OCI-LY7 (cell line): ENCODE measurements at regions of chr11 and their contacts with region 1.

Region 1: GRCh38 chr11:6682936-6683861 is at the start of gene MRPL17:
- DNase-seq: peak; percentile 100
- H3K4me3 ChIP-seq: peak within 1 kb of the TSS; percentile 85
- H3K27ac ChIP-seq: peak within 1 kb of the TSS; percentile 57
- H3K4me1 ChIP-seq: peaks cover 15% of the 10 kb centered on the region
- CTCF ChIP-seq: peak; percentile 87
- total RNA-seq, gene MRPL17: 46.8 and 59.7 TPM in 2 replicates

Region 2: DNA sequence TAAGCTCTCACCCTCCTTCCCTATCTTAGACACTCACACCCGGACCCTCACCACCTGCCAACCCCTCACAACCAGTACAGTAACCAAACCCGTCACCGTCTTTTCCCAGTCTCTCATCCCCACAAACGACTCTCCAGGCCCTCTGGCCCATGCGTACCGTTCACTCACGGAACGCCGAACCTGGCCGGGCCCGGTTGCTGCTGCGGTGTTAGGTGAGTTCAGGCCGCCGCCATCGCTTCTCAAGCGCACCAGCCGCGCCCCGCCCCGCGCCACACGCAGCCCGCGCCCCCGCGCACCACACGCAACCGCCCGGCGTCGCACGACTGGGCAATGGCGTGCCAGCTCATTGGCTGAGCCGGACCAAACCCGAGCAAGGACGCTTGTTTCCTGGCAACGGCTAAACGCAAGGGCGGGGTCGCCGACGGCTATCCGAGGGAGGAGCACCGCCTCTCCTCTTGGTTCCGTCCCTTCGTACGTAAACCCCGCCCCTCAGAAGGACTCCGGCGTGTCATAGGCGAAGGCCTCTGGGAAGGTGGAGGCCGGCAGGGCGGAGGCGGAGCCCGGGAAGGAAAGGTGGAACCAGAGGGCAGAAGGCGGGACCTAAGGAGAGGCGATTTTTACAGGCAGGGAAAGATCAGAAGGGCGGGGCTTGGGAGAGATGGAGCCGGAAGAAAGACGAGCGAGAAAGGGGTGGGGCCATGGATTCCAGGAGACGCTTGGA is 448.7 kb before region 1 on chr11 and contains the start of gene FHIP1B:
- CTCF ChIA-PET with region 1: no interaction called
- POLR2A ChIA-PET with region 1: interaction called, 3 read pairs
- intact Hi-C with region 1: loop called (anchors 10 kb)
- DNase-seq: peak; percentile 100
- H3K4me3 ChIP-seq: peak within 1 kb of the TSS; percentile 86
- H3K27ac ChIP-seq: peak within 1 kb of the TSS; percentile 49
- H3K4me1 ChIP-seq: peaks cover 35% of the 10 kb centered on the region
- CTCF ChIP-seq: no peak
- total RNA-seq, gene FHIP1B: 15.7 and 20.1 TPM in 2 replicates

Region 3: DNA sequence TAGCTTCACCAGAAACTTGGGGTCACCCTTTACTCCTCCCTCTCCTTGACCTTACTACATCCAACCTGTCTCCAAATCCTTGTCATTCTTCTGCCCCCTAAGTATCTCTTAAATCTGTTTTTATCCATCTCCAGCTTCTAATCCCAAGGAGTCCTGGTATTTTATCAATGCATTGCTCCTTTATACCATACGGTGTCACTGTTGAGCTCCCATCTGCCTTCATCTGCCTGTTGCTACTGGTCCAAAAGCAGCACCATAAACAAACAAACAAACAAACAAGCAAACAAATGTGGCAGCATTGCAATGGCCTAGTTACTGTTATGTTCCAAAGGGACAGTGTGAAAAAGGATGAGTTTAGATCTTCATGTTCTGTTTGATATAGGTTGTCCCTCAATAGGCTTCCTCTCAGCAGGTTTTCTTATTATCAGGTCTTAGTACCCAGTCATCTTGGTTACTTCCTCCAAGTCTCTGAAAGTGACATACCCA is 151.9 kb before region 1 on chr11:
- CTCF ChIA-PET with region 1: interaction called, 6 read pairs
- POLR2A ChIA-PET with region 1: interaction called, 5 read pairs
- intact Hi-C with region 1: loop called (anchors 1 kb)
- DNase-seq: peak; percentile 50
- H3K4me3 ChIP-seq: no peak overlapping the region
- H3K27ac ChIP-seq: no peak overlapping the region
- H3K4me1 ChIP-seq: peaks cover 7% of the 10 kb centered on the region
- CTCF ChIP-seq: peak; percentile 94

Region 4: GRCh38 chr11:6603287-6604080 is 79.7 kb before region 1 on chr11 and contains the starts of genes ILK and RRP8:
- CTCF ChIA-PET with region 1: interaction called, 7 read pairs
- POLR2A ChIA-PET with region 1: interaction called, 19 read pairs
- intact Hi-C with region 1: loop called (anchors 1 kb)
- DNase-seq: peak; percentile 90
- H3K4me3 ChIP-seq: peak within 1 kb of the TSS; percentile 91
- H3K27ac ChIP-seq: peak within 1 kb of the TSS; percentile 67
- H3K4me1 ChIP-seq: peaks cover 47% of the 10 kb centered on the region
- CTCF ChIP-seq: 0 out of 2 replicates have a peak, but pooled peaks have one; percentile 18
- total RNA-seq, gene ILK: 52.0 and 64.8 TPM in 2 replicates
- total RNA-seq, gene RRP8: 26.4 and 29.4 TPM in 2 replicates

Region 5: DNA sequence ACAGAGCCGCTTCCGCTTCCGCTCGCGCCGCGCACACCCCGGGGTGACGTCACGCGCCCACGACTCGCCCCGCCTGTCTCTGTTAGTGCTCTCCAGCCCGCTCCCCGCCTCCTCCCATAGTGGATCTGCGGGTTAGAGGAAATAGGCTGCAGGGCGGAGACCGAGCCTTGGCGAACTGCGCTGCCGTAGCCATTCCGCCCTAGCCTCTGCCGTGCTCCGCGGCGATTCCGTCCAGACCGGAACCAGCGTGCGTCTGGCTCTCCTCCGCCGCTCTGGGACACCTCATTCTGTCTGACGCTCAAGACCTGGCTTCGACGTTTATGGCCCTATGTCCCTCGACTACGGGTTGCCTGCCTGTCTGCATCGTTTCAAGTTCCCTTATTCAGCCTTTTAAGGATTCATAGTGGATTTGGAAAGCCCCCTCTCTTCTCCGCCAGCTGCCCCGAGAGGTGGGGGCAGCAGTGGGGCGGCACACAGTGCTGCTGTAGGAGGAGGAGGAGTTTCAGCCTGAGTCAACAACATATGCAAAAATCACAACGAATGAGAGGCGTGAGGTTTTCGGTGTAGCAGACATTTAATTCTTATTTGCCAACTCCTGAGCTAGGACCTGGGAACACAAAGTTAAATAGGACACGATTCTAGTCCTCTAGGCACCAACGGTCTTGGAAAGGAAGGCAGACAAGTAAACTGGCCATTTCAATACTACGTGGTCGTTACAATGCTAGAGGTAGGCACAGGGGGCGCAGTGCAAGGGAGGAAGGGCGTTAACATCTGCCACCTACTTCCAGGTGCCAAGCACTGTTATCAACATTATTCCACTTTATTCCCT is 70.8 kb before region 1 on chr11 and contains the start of gene TAF10:
- CTCF ChIA-PET with region 1: interaction called, 6 read pairs
- POLR2A ChIA-PET with region 1: interaction called, 22 read pairs
- intact Hi-C with region 1: loop called (anchors 1 kb)
- DNase-seq: peak; percentile 96
- H3K4me3 ChIP-seq: peak within 1 kb of the TSS; percentile 87
- H3K27ac ChIP-seq: peak within 1 kb of the TSS; percentile 89
- H3K4me1 ChIP-seq: peaks cover 27% of the 10 kb centered on the region
- CTCF ChIP-seq: peak; percentile 83
- total RNA-seq, gene TAF10: 97.0 and 117 TPM in 2 replicates

Region 6: GRCh38 chr11:6926208-6927029 is 243.2 kb after region 1 on chr11 and contains the start of gene ZNF215:
- CTCF ChIA-PET with region 1: no interaction called
- POLR2A ChIA-PET with region 1: no interaction called
- intact Hi-C with region 1: loop called (anchors 2 kb)
- DNase-seq: peak; percentile 94
- H3K4me3 ChIP-seq: peak within 1 kb of the TSS; percentile 95
- H3K27ac ChIP-seq: peak within 1 kb of the TSS; percentile 95
- H3K4me1 ChIP-seq: peaks cover 37% of the 10 kb centered on the region
- CTCF ChIP-seq: no peak
- total RNA-seq, gene ZNF215: 59.8 and 67.2 TPM in 2 replicates